Esophagus muscularis mucosa (tissue), 4 donors: ENCODE measurements at regions of chr1 and their contacts with region 1.

Region 1: GRCh38 chr1:71074681-71075080 is 6.2 kb downstream of the ZRANB2 start:
- DNase-seq: no peak
- H3K4me3 ChIP-seq: no peak overlapping the region
- H3K27ac ChIP-seq: no peak overlapping the region
- H3K4me1 ChIP-seq: peaks cover 14 to 23% (median 21%) of the 10 kb centered on the region in 4 donors
- H3K27me3 ChIP-seq: no peaks in the 10 kb centered on the region
- CTCF ChIP-seq: no peak
- EP300 ChIP-seq: no peak
- POLR2A ChIP-seq: no peak

Region 2: DNA sequence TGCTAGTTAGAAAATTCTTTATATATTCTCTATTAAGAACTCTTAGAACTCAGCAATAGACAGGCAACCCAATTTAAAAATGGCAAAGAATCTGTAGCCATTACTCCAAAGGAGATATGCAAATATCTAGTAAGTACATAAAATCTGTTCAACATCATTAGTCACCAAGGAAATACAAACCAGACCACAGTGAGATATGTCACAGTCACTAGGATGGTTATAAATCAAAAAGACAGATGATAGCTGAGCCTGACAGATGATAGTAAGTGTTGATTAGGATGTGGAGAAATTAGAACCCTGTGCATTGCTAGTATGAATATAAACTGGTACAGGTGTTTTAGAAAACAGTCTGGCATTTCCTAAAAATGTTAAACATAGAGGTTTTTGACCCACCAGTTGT is 826.9 kb before region 1 on chr1:
- intact Hi-C with region 1: loop called (anchors 10 kb)
- DNase-seq: no peak
- H3K4me3 ChIP-seq: no peak overlapping the region
- H3K27ac ChIP-seq: no peak overlapping the region
- H3K4me1 ChIP-seq: no peaks in the 10 kb centered on the region
- H3K27me3 ChIP-seq: no peaks in the 10 kb centered on the region
- CTCF ChIP-seq: no peak
- EP300 ChIP-seq: no peak
- POLR2A ChIP-seq: no peak